ENCODE measurements at regions of chr2 and their contacts with region 1.

Region 1: GRCh38 chr2:224513991-224514390 is 71.2 kb downstream of the CUL3 start:
- DNase-seq: no peak
- ATAC-seq: no peak
- H3K4me3 ChIP-seq: no peak overlapping the region
- H3K4me3 Mint-ChIP-seq: no peak overlapping the region
- H3K27ac ChIP-seq: no peak overlapping the region
- H3K27ac Mint-ChIP-seq: no peak overlapping the region
- H3K4me1 ChIP-seq: peaks cover 0 to 6% of the 10 kb centered on the region in 2 donors
- H3K4me1 Mint-ChIP-seq: peaks cover 31 to 62% (median 49%) of the 10 kb centered on the region in 7 donors
- H3K27me3 ChIP-seq: no peaks in the 10 kb centered on the region
- H3K27me3 Mint-ChIP-seq: no peaks in the 10 kb centered on the region

Region 2: GRCh38 chr2:224498991-224499390 is 15.0 kb before region 1 on chr2:
- CTCF ChIA-PET with region 1: interaction called, 7 read pairs
- POLR2A ChIA-PET with region 1: interaction called, 4 read pairs
- intact Hi-C with region 1: loop called in 1 of 2 experiments (anchors 2 kb)
- DNase-seq: no peak
- ATAC-seq: no peak
- H3K4me3 ChIP-seq: no peak overlapping the region
- H3K4me3 Mint-ChIP-seq: no peak overlapping the region
- H3K27ac ChIP-seq: no peak overlapping the region
- H3K27ac Mint-ChIP-seq: peak overlapping the region in 1 of 9 donors; percentile 65
- H3K4me1 ChIP-seq: no peaks in the 10 kb centered on the region
- H3K4me1 Mint-ChIP-seq: peaks cover 0 to 24% (median 10%) of the 10 kb centered on the region in 7 donors
- H3K27me3 ChIP-seq: no peaks in the 10 kb centered on the region
- H3K27me3 Mint-ChIP-seq: no peaks in the 10 kb centered on the region

Region 3: GRCh38 chr2:224525774-224526173 is 11.8 kb after region 1 on chr2:
- CTCF ChIA-PET with region 1: interaction called, 3 read pairs
- POLR2A ChIA-PET with region 1: no interaction called
- intact Hi-C with region 1: loop called (anchors 1 to 2 kb)
- DNase-seq: no peak
- ATAC-seq: no peak
- H3K4me3 ChIP-seq: no peak overlapping the region
- H3K4me3 Mint-ChIP-seq: peak overlapping the region in 9 of 10 donors; percentile 4 to 74 (median 61)
- H3K27ac ChIP-seq: no peak overlapping the region
- H3K27ac Mint-ChIP-seq: peak overlapping the region in 8 of 9 donors; percentile 19 to 70 (median 44)
- H3K4me1 ChIP-seq: peaks cover 27 to 35% of the 10 kb centered on the region in 2 donors
- H3K4me1 Mint-ChIP-seq: peaks cover 49 to 74% (median 67%) of the 10 kb centered on the region in 7 donors
- H3K27me3 ChIP-seq: no peaks in the 10 kb centered on the region
- H3K27me3 Mint-ChIP-seq: no peaks in the 10 kb centered on the region